Activated CD4-positive, alpha-beta T cell treated with anti-CD3 and anti-CD28 coated beads for 36 hours (primary cell): ENCODE measurements at regions of chr5 and their contacts with region 1.

Region 1: GRCh38 chr5:169670769-169671525 is 33.9 kb downstream of the DOCK2 start:
- DNase-seq: peak; percentile 51
- ATAC-seq: peak; percentile 98
- H3K4me3 Mint-ChIP-seq: no peak overlapping the region
- H3K27ac Mint-ChIP-seq: peak overlapping the region; percentile 45
- H3K4me1 Mint-ChIP-seq: peaks cover 32% of the 10 kb centered on the region
- H3K27me3 Mint-ChIP-seq: no peaks in the 10 kb centered on the region

Region 2: GRCh38 chr5:169629847-169630548 is 40.9 kb before region 1 on chr5:
- CTCF ChIA-PET with region 1: no interaction called
- POLR2A ChIA-PET with region 1: no interaction called
- intact Hi-C with region 1: loop called in 1 of 2 experiments (anchors 2 kb)
- DNase-seq: peak; percentile 39
- ATAC-seq: peak; percentile 91
- H3K4me3 Mint-ChIP-seq: no peak overlapping the region
- H3K27ac Mint-ChIP-seq: no peak overlapping the region
- H3K4me1 Mint-ChIP-seq: peaks cover 4% of the 10 kb centered on the region
- H3K27me3 Mint-ChIP-seq: peaks cover 3% of the 10 kb centered on the region

Region 3: GRCh38 chr5:170552621-170553115 is 881.7 kb after region 1 on chr5:
- CTCF ChIA-PET with region 1: no interaction called
- POLR2A ChIA-PET with region 1: no interaction called
- intact Hi-C with region 1: no loop called
- DNase-seq: no peak
- ATAC-seq: no peak
- H3K4me3 Mint-ChIP-seq: no peak overlapping the region
- H3K27ac Mint-ChIP-seq: no peak overlapping the region
- H3K4me1 Mint-ChIP-seq: no peaks in the 10 kb centered on the region
- H3K27me3 Mint-ChIP-seq: peaks cover 11% of the 10 kb centered on the region